Heart left ventricle (tissue), 16 donors: ENCODE measurements at regions of chr12 and their contacts with region 1.

Region 1: DNA sequence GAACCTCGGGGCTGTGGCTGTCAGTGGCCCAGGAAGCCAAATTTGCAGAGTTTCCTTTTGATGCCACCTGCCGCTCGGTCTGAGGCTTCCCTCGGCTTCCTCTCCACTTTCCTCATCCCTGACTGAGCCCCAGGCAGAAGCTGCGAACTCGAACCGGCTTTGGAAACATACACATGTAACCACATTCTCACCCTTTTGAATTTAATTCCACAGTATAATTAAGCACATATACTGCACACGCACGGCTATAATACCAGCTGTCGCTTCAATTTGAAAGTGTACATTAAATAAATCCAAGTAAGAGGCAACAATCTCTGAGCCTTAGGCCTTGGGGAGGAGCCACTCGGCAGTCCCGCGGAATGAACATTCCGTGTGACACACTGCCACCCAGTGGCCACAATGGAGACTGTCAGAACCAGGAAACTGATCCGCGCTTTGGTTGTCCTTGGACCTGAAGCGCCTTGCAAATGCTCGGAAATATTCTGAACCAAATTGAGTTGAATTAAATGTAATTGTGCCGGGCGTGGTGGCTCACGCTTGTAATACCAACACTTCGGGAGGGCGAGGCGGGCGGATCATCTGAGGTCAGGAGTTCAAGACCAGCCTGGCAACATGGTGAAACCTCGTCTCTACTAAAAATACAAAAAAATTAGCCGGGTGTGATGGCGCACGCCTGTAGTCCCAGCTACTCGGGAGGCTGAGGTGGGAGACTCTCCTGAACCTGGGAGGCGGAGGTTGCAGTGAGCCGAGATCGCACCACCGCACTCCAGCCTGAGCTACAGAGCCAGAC is 117.9 kb upstream of the TMPO start:
- DNase-seq: peak; percentile 71 to 88 (median 80)
- ATAC-seq: peak; percentile 89 to 97 (median 96)
- H3K4me3 ChIP-seq: peak overlapping the region in 10 of 12 donors; percentile 32 to 57 (median 47)
- H3K27ac ChIP-seq: peak overlapping the region in 2 of 12 donors; percentile 2 to 31
- H3K4me1 ChIP-seq: peaks cover 0 to 22% (median 2%) of the 10 kb centered on the region in 12 donors
- H3K27me3 ChIP-seq: no peaks in the 10 kb centered on the region
- CTCF ChIP-seq: peak; percentile 83 to 95 (median 90)
- POLR2A ChIP-seq: no peak

Region 2: GRCh38 chr12:96578526-96579125 is 1818.9 kb before region 1 on chr12:
- intact Hi-C with region 1: loop called in 6 of 10 experiments (anchors 5 to 10 kb)
- DNase-seq: no peak
- ATAC-seq: peak in 3 of 4 donors; percentile 48 to 63 (median 48)
- H3K4me3 ChIP-seq: no peak overlapping the region
- H3K27ac ChIP-seq: no peak overlapping the region
- H3K4me1 ChIP-seq: no peaks in the 10 kb centered on the region
- H3K27me3 ChIP-seq: no peaks in the 10 kb centered on the region
- CTCF ChIP-seq: peak; percentile 43 to 72 (median 60)
- POLR2A ChIP-seq: no peak

Region 3: DNA sequence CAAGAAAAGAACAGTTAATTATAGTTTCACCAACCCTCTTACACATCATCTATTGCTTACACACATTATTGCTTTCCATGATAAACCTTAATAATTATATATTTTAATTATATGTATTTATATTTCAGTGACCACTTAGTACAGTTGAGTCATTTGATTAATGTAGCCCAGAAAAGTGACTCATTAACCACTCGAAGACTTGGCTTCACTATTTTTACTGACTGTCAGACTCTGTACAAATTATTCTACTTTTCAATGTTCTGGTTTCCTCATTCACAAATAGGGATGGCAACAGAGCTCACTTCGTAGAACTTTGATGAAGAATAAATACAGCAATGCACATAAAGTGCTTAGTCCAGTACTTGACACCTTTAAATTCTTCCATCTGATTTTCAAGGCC is 1809.8 kb before region 1 on chr12:
- intact Hi-C with region 1: loop called in 1 of 10 experiments (anchors 10 kb)
- DNase-seq: no peak
- ATAC-seq: no peak
- H3K4me3 ChIP-seq: no peak overlapping the region
- H3K27ac ChIP-seq: no peak overlapping the region
- H3K4me1 ChIP-seq: no peaks in the 10 kb centered on the region
- H3K27me3 ChIP-seq: no peaks in the 10 kb centered on the region
- CTCF ChIP-seq: no peak
- POLR2A ChIP-seq: no peak

Region 4: DNA sequence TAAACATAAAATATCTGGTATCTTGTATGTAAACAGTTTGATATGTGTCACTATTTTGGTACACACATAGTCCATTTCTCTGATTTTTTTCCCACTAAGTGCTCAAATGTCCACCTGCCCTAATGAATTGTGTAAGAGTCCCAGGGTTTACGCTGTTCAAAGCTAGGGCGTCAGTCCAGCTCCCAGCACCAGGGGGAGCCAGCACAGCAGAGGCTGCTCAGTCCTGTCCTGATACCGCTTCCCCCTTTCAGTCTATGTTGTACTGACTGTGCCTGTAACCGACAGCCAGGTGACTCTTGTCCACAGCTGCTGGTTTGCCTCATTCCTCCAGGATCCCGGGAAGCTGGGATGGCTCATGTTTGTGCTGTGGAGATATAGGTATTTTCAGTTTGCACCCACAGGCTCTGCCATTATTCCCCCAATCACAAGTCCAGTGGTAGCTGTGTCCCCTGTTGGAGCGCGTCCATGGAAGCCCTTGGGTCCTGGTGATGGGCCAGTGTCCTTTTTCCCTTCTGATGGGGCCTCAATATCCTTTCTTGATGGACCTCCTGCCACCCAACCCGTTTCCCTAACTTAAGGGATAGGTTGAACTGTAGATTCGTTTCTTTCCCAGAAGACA is 1248.5 kb before region 1 on chr12:
- intact Hi-C with region 1: loop called in 3 of 10 experiments (anchors 10 kb)
- DNase-seq: peak; percentile 24 to 64 (median 36)
- ATAC-seq: peak; percentile 77 to 94 (median 91)
- H3K4me3 ChIP-seq: no peak overlapping the region
- H3K27ac ChIP-seq: no peak overlapping the region
- H3K4me1 ChIP-seq: no peaks in the 10 kb centered on the region
- H3K27me3 ChIP-seq: no peaks in the 10 kb centered on the region
- CTCF ChIP-seq: peak; percentile 40 to 79 (median 66)
- POLR2A ChIP-seq: no peak

Region 5: GRCh38 chr12:97308576-97309198 is 1088.8 kb before region 1 on chr12:
- intact Hi-C with region 1: loop called in 3 of 10 experiments (anchors 5 to 10 kb)
- DNase-seq: no peak
- ATAC-seq: no peak
- H3K4me3 ChIP-seq: no peak overlapping the region
- H3K27ac ChIP-seq: no peak overlapping the region
- H3K4me1 ChIP-seq: peaks cover 0 to 10% (median 0%) of the 10 kb centered on the region in 12 donors
- H3K27me3 ChIP-seq: peaks cover 0 to 6% (median 0%) of the 10 kb centered on the region in 9 donors
- CTCF ChIP-seq: peak; percentile 50 to 81 (median 73)
- POLR2A ChIP-seq: no peak